Motor neuron (in vitro differentiated cells): ENCODE measurements at regions of chr18 and their contacts with region 1.

Region 1: GRCh38 chr18:33264566-33264965 is 176.0 kb downstream of the CCDC178 start:
- ATAC-seq: peak in 5 of 8 experiments; percentile 99
- H3K4me3 ChIP-seq: no peak overlapping the region
- H3K27ac ChIP-seq: no peak overlapping the region
- H3K4me1 ChIP-seq: peaks cover 6 to 8% of the 10 kb centered on the region in 2 donors

Region 2: DNA sequence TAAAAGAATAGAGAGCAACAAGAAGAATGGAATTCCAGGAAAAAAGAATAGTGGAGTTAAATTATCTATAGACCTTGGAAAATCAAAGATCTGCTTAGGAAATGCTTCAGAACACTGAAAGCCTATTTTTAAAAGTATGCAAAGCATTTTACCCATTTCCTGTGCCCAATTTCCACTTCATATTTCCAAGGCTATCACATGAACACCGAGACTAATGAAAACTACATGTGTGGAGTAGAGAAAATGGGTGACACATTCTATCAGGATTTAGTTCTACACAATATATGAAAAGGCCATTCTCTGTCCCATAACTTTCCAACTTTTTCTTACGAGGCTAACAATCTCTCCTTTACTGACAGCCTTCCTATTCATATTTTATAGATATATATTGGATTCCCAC is 103.4 kb before region 1 on chr18:
- in situ Hi-C with region 1: loop called in 1 of 9 experiments (anchors 25 kb)
- ATAC-seq: no peak
- H3K4me3 ChIP-seq: no peak overlapping the region
- H3K27ac ChIP-seq: no peak overlapping the region
- H3K4me1 ChIP-seq: no peaks in the 10 kb centered on the region

Region 3: GRCh38 chr18:33804258-33804657 is 539.7 kb after region 1 on chr18:
- in situ Hi-C with region 1: no loop called
- ATAC-seq: peak in 2 of 8 experiments; percentile 43 to 60
- H3K4me3 ChIP-seq: no peak overlapping the region
- H3K27ac ChIP-seq: no peak overlapping the region
- H3K4me1 ChIP-seq: peaks cover 0 to 7% of the 10 kb centered on the region in 2 donors